CD4-positive, alpha-beta T cell (primary cell): ENCODE measurements at regions of chr20 and their contacts with region 1.

Region 1: GRCh38 chr20:37421988-37422387 is 76.0 kb downstream of the SRC start:
- DNase-seq: no peak
- ATAC-seq: no peak
- H3K4me3 ChIP-seq: no peak overlapping the region
- H3K4me3 Mint-ChIP-seq: no peak overlapping the region
- H3K27ac ChIP-seq: no peak overlapping the region
- H3K27ac Mint-ChIP-seq: no peak overlapping the region
- H3K4me1 ChIP-seq: no peaks in the 10 kb centered on the region
- H3K4me1 Mint-ChIP-seq: no peaks in the 10 kb centered on the region
- H3K27me3 ChIP-seq: peaks cover 16 to 24% of the 10 kb centered on the region in 2 experiments
- H3K27me3 Mint-ChIP-seq: peaks cover 38% of the 10 kb centered on the region
- CTCF ChIP-seq: no peak

Region 2: DNA sequence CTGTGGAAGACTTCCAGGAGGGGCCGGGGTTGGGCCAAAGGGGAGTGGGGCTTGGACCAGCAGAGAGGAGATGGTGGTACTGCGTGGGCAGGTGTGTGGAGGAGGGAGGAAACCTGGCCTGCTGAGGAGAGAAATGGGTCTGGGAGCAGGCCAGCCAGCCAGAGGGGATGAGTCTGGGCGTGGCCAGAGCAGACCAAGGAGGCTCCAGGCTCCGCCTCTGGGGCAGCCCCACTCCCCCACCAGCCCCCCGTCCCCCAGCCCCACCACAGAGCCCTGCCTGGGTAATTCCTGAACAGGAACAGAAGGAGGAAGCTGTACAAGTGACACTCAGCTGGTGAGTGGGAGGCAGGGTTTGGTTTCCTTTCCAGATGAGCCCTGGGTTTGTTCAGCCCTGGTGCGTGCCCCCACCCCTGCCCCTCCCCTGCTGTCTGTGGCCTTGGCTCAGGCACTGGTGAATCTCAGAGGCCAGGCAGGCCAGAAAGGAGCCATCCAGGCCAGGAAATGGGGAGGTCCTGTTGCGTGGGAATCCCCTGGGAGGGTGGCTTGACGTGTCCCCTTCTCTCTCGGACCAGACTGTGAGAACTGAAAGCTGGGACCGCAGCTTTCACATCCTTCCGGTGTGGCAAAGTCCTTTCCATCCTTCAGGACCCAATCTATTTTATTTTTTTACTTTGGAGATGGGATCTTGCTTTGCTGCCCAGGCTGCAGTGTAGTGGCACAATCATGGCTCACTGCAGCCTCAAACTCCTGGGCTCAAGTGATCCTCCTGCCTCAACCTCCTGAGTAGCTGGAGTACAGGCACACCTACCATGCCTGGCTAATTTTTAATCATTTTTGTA is 85.4 kb before region 1 on chr20:
- CTCF ChIA-PET with region 1: no interaction called
- POLR2A ChIA-PET with region 1: no interaction called
- intact Hi-C with region 1: no loop called
- DNase-seq: peak in 5 of 14 experiments; percentile 13 to 80 (median 39)
- ATAC-seq: peak; percentile 66
- H3K4me3 ChIP-seq: no peak overlapping the region
- H3K4me3 Mint-ChIP-seq: no peak overlapping the region
- H3K27ac ChIP-seq: no peak overlapping the region
- H3K27ac Mint-ChIP-seq: no peak overlapping the region
- H3K4me1 ChIP-seq: peaks cover 18% of the 10 kb centered on the region
- H3K4me1 Mint-ChIP-seq: peaks cover 19% of the 10 kb centered on the region
- H3K27me3 ChIP-seq: no peaks in the 10 kb centered on the region
- H3K27me3 Mint-ChIP-seq: no peaks in the 10 kb centered on the region
- CTCF ChIP-seq: no peak

Region 3: DNA sequence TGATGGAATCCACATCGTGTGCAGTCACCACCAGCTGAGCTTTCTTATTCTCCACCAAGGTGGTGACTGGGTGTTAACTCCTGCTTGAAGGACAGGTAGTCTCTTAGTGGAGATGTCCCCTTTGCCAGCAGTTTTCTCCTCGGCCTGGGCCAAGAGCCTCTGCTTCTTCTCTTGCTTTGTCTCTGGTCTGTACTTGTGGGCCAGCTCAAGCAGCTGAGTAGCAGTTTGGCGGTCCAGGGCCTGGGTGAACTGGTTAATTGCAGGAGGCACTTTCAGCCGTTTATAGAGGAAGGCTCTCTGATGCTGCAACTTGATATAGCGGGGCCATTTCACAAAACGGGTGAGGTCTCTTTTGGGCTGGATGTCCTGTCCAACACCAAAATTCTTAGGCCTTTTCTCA is 23.1 kb after region 1 on chr20:
- CTCF ChIA-PET with region 1: no interaction called
- POLR2A ChIA-PET with region 1: no interaction called
- intact Hi-C with region 1: loop called in 1 of 2 experiments (anchors 2 kb)
- DNase-seq: no peak
- ATAC-seq: no peak
- H3K4me3 ChIP-seq: no peak overlapping the region
- H3K4me3 Mint-ChIP-seq: no peak overlapping the region
- H3K27ac ChIP-seq: no peak overlapping the region
- H3K27ac Mint-ChIP-seq: no peak overlapping the region
- H3K4me1 ChIP-seq: no peaks in the 10 kb centered on the region
- H3K4me1 Mint-ChIP-seq: no peaks in the 10 kb centered on the region
- H3K27me3 ChIP-seq: no peaks in the 10 kb centered on the region
- H3K27me3 Mint-ChIP-seq: no peaks in the 10 kb centered on the region
- CTCF ChIP-seq: no peak